AG04449 (cell line): ENCODE measurements at regions of chr4 and their contacts with region 1.

Region 1: GRCh38 chr4:152640058-152640833 is 39.6 kb downstream of the TMEM154 start:
- DNase-seq: no peak
- H3K4me3 ChIP-seq: no peak overlapping the region
- CTCF ChIP-seq: no peak

Region 2: GRCh38 chr4:152408514-152409327 is 231.5 kb before region 1 on chr4:
- CTCF ChIA-PET with region 1: interaction called, 29 read pairs
- POLR2A ChIA-PET with region 1: no interaction called
- DNase-seq: no peak
- H3K4me3 ChIP-seq: no peak overlapping the region
- CTCF ChIP-seq: peak; percentile 46

Region 3: GRCh38 chr4:152448038-152448707 is 192.1 kb before region 1 on chr4:
- CTCF ChIA-PET with region 1: interaction called, 52 read pairs
- POLR2A ChIA-PET with region 1: no interaction called
- DNase-seq: no peak
- H3K4me3 ChIP-seq: no peak overlapping the region
- CTCF ChIP-seq: no peak

Region 4: DNA sequence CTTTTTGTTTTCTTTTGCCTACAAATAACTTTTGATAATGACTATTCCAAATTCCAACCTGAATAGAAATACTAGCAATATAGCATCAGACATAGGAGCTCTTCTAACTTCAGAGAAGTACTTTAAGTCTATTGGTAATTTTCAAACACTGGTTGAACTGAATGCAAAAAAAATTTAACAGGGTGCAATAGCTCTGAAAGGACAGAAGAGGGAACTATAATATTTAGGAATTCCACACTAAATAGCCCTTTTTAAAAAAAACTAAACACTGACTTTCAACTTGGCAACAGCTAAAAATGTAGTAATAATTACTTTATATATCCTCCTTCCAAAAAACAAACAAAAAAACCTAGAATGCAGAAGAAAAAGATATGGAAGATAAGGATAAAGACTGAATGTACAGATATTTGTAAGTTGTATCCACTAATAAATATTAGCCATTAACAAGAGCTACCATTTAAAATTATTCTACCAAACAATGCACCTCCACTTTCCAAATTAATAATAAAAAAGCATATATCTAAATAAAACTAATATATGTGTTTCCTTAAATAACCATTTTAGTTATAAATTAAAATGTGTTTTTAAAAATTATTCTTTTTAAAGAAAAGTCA is 185.7 kb before region 1 on chr4:
- CTCF ChIA-PET with region 1: interaction called, 52 read pairs
- POLR2A ChIA-PET with region 1: no interaction called
- DNase-seq: no peak
- H3K4me3 ChIP-seq: no peak overlapping the region
- CTCF ChIP-seq: peak; percentile 29

Region 5: GRCh38 chr4:152460488-152460887 is 179.8 kb before region 1 on chr4:
- CTCF ChIA-PET with region 1: interaction called, 41 read pairs
- POLR2A ChIA-PET with region 1: no interaction called
- DNase-seq: peak; percentile 24
- H3K4me3 ChIP-seq: no peak overlapping the region
- CTCF ChIP-seq: no peak

Region 6: GRCh38 chr4:152485726-152486276 is 154.4 kb before region 1 on chr4:
- CTCF ChIA-PET with region 1: interaction called, 12 read pairs
- POLR2A ChIA-PET with region 1: no interaction called
- DNase-seq: peak; percentile 56
- H3K4me3 ChIP-seq: peak overlapping the region; percentile 24
- CTCF ChIP-seq: no peak

Region 7: GRCh38 chr4:152556283-152556682 is 84.0 kb before region 1 on chr4:
- CTCF ChIA-PET with region 1: no interaction called
- POLR2A ChIA-PET with region 1: no interaction called
- DNase-seq: no peak
- H3K4me3 ChIP-seq: no peak overlapping the region
- CTCF ChIP-seq: no peak

Region 8: GRCh38 chr4:152628128-152628527 is 12.1 kb before region 1 on chr4:
- CTCF ChIA-PET with region 1: interaction called, 38 read pairs
- POLR2A ChIA-PET with region 1: no interaction called
- DNase-seq: no peak
- H3K4me3 ChIP-seq: no peak overlapping the region
- CTCF ChIP-seq: no peak